ENCODE measurements at regions of chr9 and their contacts with region 1.

Region 1: GRCh38 chr9:76379512-76379911 is 14.7 kb downstream of the RFK start:
- DNase-seq: no peak
- H3K4me3 ChIP-seq: no peak overlapping the region
- CTCF ChIP-seq: no peak

Region 2: DNA sequence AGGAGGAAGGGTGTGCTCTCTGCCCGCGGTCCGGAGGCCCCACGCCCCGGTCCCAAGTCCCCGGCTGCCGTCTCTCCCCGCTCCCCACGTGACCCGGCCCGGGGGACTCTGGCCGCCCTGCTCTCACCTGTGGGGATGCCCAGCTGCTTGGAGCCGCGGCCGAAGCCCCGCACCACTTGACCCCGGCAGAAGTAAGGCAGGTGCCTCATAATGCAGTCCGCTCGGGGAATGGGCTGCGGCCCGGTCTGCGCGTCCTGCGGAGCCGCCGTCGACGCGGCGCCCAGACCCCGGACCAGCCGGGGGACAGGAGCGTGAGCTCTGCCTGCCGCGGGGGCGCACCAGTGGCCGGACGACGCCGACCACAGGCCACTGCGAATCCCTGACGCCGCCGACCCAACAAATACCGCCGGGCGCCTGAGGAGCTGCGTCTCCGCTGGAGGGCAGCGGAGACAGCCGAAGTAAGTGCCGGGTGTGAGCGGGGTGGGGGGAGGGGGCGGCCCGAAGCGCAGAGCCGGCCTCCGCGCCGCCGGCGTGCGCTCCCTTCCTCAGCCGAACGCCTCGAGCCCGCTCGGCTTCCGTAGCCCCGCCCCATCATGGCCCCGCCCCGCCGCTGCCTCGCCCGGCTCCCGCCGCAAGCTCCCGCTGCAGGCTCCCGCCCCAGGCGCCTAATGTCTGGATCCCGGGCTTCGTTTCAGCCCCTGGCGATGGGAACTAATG is 14.6 kb after region 1 on chr9 and contains the start of gene RFK:
- CTCF ChIA-PET with region 1: interaction called, 11 read pairs
- POLR2A ChIA-PET with region 1: interaction called, 7 read pairs
- DNase-seq: peak; percentile 36
- H3K4me3 ChIP-seq: peak within 1 kb of the TSS; percentile 89
- CTCF ChIP-seq: peak; percentile 60